ENCODE measurements at regions of chr6 and their contacts with region 1.

Region 1: DNA sequence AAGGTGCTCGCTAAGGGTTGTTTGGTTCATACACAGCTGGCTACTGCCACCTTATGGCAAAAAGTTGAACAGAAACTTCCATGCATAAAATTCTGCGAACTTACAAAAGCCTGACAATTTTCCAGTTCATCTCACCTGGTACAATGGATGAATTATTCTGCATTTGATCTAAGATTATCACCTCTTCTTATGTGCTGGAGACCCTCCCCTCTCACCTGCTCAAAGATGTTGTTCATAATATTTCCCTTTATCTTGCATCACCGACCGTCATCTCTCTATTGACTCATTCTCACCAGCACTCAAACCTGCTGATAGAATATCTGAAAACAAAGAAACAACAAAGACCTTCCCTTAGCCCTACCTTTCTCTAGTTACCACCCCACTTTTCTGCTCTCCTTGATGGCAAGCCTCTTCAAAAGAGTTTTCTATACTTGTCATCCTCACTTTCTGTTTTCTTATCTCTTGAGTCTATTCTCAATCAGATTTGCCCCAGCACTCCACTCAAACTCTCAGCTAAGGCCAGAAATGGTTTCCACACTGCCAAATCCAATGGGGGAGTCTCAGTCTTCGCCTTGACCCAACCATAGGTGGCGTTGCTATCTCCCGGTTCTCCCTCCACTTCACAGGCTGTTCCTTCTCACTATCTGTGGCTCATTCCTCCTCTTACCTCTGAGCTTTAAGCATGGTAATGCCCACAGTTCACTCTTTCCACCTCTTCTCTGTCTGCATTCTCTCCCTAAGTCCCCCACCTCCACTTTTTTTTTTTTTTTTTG is 25.8 kb downstream of the SNRNP48 start:
- DNase-seq: peak; percentile 82
- H3K4me3 Mint-ChIP-seq: no peak overlapping the region
- H3K27ac Mint-ChIP-seq: no peak overlapping the region
- H3K4me1 Mint-ChIP-seq: peaks cover 12% of the 10 kb centered on the region
- H3K27me3 Mint-ChIP-seq: peaks cover 7% of the 10 kb centered on the region

Region 2: GRCh38 chr6:6676910-6677441 is 938.8 kb before region 1 on chr6:
- intact Hi-C with region 1: loop called (anchors 5 kb)
- DNase-seq: peak; percentile 95
- H3K4me3 Mint-ChIP-seq: peak overlapping the region; percentile 8
- H3K27ac Mint-ChIP-seq: no peak overlapping the region
- H3K4me1 Mint-ChIP-seq: peaks cover 29% of the 10 kb centered on the region
- H3K27me3 Mint-ChIP-seq: peaks cover 2% of the 10 kb centered on the region

Region 3: DNA sequence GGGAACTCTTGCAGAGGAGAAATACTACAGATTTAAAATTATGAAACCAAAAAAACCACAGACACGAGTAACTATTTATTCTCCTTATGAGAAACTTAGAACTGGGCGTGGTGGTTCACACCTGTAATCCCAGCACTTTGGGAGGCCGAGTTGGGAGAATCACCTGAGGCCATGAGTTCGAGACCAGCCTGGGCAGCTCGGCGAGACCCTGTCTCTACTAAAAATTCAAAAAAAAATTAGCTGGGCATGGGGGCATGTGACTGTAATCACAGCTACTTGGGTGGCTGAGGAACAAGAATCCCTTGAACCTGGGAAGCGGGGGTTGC is 339.6 kb before region 1 on chr6:
- intact Hi-C with region 1: loop called (anchors 1 kb)
- DNase-seq: no peak
- H3K4me3 Mint-ChIP-seq: no peak overlapping the region
- H3K27ac Mint-ChIP-seq: no peak overlapping the region
- H3K4me1 Mint-ChIP-seq: peaks cover 6% of the 10 kb centered on the region
- H3K27me3 Mint-ChIP-seq: no peaks in the 10 kb centered on the region

Region 4: DNA sequence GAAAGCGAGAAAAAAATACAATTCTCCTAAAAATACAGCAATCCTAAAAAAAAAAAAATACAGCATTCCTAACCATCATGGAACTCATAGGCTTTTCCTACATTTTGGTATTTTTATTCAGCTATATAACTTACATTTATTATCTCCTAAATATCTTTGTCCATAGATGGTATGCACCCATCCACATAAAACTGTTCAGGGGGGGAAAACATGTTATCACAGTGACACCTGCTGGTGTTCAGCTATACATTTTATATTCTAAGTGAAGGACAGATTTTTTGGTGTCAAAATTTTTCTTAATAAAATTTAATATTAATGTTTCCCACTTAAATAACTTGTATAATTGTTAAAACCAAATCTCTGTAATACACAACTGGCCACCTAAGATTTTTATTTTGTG is 390.4 kb after region 1 on chr6:
- intact Hi-C with region 1: loop called (anchors 10 kb)
- DNase-seq: peak; percentile 63
- H3K4me3 Mint-ChIP-seq: no peak overlapping the region
- H3K27ac Mint-ChIP-seq: no peak overlapping the region
- H3K4me1 Mint-ChIP-seq: peaks cover 3% of the 10 kb centered on the region
- H3K27me3 Mint-ChIP-seq: no peaks in the 10 kb centered on the region

Region 5: DNA sequence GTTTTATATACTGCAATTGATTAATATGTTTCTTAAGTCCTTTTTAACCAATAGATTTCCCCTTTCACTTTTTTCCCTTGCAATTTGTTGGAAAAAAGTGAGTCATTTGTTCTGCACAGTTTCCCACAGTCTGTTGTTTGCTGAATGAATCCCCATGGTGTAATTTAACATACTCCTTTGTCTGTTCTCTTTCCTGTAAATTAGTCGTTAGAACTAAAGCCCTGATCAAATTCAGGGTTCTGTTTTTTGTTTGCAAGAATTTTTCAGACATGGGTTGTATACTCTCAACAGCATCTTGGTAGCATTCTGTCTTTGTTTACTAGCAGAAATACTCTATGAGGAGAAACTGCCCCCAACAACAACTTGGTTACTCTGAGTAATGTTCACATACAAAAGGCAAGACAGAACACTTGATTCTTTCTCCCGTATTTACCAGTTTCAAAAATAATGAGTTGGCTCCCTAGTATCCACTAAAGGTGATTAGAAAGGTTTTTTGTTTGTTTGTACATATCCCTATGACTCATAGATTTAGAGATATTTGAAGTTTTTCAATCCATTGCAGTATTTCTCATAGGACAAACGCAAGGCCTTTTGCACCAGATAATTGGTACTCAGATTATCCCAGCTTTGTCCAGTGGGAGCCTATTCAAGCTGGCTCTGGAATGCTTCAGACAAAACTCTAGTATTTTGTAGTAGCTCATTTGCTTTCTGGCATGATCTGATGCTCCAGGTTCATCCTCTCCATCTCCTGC is 431.9 kb after region 1 on chr6:
- intact Hi-C with region 1: no loop called
- DNase-seq: no peak
- H3K4me3 Mint-ChIP-seq: no peak overlapping the region
- H3K27ac Mint-ChIP-seq: no peak overlapping the region
- H3K4me1 Mint-ChIP-seq: peaks cover 6% of the 10 kb centered on the region
- H3K27me3 Mint-ChIP-seq: no peaks in the 10 kb centered on the region